ENCODE measurements at regions of chr20 and their contacts with region 1.

Region 1: DNA sequence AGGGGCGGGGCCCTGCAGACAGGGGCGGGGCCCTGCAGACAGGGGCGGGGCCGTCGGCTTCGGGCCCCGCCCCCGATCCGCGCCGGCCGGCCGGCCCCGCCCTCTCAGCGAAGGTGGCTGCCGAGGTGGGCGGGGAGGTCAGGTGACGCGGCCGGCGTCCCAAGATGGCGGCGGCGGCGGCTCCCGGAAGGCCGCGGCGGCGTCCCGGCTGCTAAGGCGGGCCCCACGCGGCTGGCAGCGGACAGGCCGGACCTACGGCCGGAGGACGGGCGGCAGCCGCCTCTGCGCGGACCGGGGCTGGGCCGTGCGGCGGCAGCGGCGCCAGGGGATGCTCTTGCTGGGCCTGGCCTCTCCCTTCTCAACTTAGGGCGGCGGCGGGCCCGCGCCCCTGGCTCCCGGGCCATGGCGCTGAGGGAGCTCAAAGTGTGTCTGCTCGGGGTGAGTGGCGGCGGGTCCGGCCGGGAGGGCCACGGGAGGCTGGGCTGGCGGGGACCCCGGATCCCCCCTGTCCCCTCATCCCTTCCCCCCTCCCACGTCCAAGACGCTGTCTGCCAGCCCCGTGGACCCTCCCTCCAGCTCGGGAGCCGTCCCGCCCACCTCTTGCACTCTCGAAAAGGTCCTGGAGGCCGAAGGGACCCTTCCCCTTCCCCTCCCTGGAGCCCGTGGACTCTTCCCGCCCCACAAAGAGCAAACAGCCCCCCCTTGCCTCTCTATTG is at the start of gene RAB22A:
- DNase-seq: peak; percentile 85
- H3K4me3 Mint-ChIP-seq: peak within 1 kb of the TSS; percentile 90
- H3K27ac Mint-ChIP-seq: peak within 1 kb of the TSS; percentile 89
- H3K4me1 Mint-ChIP-seq: peaks cover 73% of the 10 kb centered on the region
- H3K27me3 Mint-ChIP-seq: no peaks in the 10 kb centered on the region
- total RNA-seq, gene RAB22A: 10.5 to 12.0 TPM

Region 2: GRCh38 chr20:57622579-57623377 is 687.0 kb before region 1 on chr20:
- CTCF ChIA-PET with region 1: no interaction called
- POLR2A ChIA-PET with region 1: no interaction called
- intact Hi-C with region 1: loop called (anchors 5 kb)
- DNase-seq: peak; percentile 85
- H3K4me3 Mint-ChIP-seq: no peak overlapping the region
- H3K27ac Mint-ChIP-seq: peak overlapping the region; percentile 53
- H3K4me1 Mint-ChIP-seq: peaks cover 64% of the 10 kb centered on the region
- H3K27me3 Mint-ChIP-seq: peaks cover 2% of the 10 kb centered on the region

Region 3: DNA sequence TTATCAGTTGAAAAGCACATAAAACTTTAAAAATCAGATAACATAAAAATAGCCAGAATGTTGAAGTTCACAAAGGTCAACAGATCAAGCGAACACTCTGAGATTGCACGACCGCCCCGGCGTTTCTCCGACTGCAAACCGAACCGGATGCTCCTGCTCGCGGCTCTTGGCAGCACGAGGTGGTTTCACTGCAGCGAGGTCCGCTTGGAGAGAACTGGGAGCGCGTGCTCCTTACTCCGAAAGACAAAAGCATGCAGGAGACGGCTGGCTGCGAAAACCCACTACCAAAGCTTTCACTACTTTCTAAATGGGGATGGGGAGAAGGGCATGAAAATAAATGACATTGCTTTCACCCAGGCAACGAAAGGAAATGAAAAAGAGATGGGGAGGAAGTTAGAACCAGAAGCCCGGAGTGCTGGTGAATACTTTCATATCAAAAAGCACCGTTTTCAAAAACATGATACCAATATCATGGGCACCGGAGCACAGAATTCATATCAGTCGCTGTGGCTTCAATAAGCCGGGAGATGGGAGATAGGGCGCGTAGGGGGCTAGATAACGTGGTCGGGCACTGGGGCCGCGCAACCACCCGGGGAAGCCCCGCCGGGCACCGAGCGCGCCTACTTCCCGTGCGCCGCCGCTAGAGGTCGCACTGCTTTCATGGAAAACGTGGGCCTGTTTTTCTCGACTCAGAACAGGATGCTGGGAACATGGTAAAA is 73.0 kb before region 1 on chr20:
- CTCF ChIA-PET with region 1: interaction called, 12 read pairs
- POLR2A ChIA-PET with region 1: no interaction called
- intact Hi-C with region 1: loop called (anchors 1 kb)
- DNase-seq: peak; percentile 92
- H3K4me3 Mint-ChIP-seq: peak overlapping the region; percentile 81
- H3K27ac Mint-ChIP-seq: peak overlapping the region; percentile 78
- H3K4me1 Mint-ChIP-seq: peaks cover 23% of the 10 kb centered on the region
- H3K27me3 Mint-ChIP-seq: peaks cover 2% of the 10 kb centered on the region

Region 4: DNA sequence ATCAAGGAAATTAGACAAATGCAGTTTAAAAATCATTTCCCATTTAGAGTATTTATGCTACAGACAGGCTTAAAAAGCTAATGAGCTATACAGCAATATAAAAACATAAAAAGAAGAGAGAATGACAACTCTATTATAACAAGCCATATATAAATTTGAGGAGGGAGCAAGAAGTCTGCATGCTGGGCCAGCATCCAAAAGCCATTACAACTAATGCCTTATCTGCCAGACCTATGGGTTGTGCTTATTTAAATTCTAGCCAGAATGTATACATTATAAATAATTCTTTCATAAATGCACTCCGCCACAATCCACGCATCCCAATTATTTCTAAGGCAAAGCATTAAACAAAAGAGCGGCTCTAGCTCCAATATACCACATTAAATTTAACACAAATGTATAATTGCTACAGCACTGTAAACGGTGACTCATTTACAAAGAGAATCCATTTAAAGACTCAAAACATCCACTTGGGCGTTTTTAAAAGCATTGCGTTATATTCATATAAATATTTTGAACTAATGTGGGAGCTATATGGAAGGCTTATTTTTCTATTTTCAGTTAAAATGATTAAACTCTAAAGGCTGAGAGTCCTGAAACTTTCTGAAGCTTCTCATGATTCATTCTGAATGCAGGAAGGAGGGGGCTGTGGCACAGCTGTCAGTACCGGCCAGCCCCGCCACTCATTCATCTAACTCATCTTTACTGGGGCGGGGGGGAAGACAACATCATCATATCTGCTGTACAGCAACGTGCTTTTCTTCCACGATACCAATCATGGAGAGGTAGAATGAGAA is 37.9 kb before region 1 on chr20:
- CTCF ChIA-PET with region 1: interaction called, 3 read pairs
- POLR2A ChIA-PET with region 1: no interaction called
- intact Hi-C with region 1: loop called (anchors 1 kb)
- DNase-seq: peak; percentile 83
- H3K4me3 Mint-ChIP-seq: no peak overlapping the region
- H3K27ac Mint-ChIP-seq: no peak overlapping the region
- H3K4me1 Mint-ChIP-seq: peaks cover 28% of the 10 kb centered on the region
- H3K27me3 Mint-ChIP-seq: no peaks in the 10 kb centered on the region

Region 5: GRCh38 chr20:58388882-58389323 is 79.2 kb after region 1 on chr20 and contains the start of gene VAPB:
- CTCF ChIA-PET with region 1: no interaction called
- POLR2A ChIA-PET with region 1: interaction called, 18 read pairs
- intact Hi-C with region 1: loop called (anchors 1 kb)
- DNase-seq: peak; percentile 98
- H3K4me3 Mint-ChIP-seq: peak within 1 kb of the TSS; percentile 95
- H3K27ac Mint-ChIP-seq: peak within 1 kb of the TSS; percentile 92
- H3K4me1 Mint-ChIP-seq: peaks cover 38% of the 10 kb centered on the region
- H3K27me3 Mint-ChIP-seq: peaks cover 2% of the 10 kb centered on the region
- total RNA-seq, gene VAPB: 34.6 to 37.0 TPM

Region 6: GRCh38 chr20:58888521-58889333 is 579.0 kb after region 1 on chr20:
- CTCF ChIA-PET with region 1: no interaction called
- POLR2A ChIA-PET with region 1: no interaction called
- intact Hi-C with region 1: loop called (anchors 5 kb)
- DNase-seq: peak; percentile 88
- H3K4me3 Mint-ChIP-seq: peak overlapping the region; percentile 80
- H3K27ac Mint-ChIP-seq: peak overlapping the region; percentile 58
- H3K4me1 Mint-ChIP-seq: peaks cover 27% of the 10 kb centered on the region
- H3K27me3 Mint-ChIP-seq: no peaks in the 10 kb centered on the region